ENCODE measurements at regions of chrX and their contacts with region 1.

Region 1: DNA sequence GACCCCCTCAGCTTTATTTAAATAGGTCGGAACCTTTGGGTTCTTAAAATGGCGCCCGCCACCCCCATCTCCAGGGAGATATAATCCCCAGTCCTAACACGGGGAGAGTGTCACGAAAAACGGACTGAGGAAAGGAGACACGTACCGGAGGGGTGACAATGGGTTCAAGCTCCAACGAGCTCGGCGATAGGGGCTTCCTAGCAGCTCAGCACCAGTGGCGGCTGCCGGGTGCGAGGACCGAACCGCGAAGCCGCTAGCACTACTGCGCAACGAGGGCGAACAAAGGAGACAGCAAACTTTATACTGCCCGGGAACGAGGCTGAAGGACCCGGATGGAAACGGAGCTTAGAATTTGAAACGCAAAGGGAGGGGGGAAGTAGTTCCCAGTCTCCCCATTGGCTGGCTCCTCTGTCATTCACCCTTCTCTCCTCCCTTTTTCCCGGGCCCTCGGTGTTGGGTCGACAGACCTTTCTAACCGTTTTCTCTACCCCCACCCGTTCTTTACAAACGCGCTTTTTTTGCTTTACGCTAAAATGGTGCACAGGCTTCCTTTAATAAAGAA is at the start of gene RBMX:
- DNase-seq: peak; percentile 88 to 91 (median 90)
- H3K4me3 ChIP-seq: peak within 1 kb of the TSS; percentile 86 to 90
- H3K4me3 Mint-ChIP-seq: peak within 1 kb of the TSS; percentile 93 to 99 (median 98)
- H3K27ac ChIP-seq: peak within 1 kb of the TSS; percentile 99
- H3K27ac Mint-ChIP-seq: peak within 1 kb of the TSS; percentile 97 to 100 (median 99)
- H3K4me1 ChIP-seq: peaks cover 17% of the 10 kb centered on the region
- H3K4me1 Mint-ChIP-seq: peaks cover 1 to 30% (median 16%) of the 10 kb centered on the region in 4 donors
- H3K27me3 ChIP-seq: no peaks in the 10 kb centered on the region
- H3K27me3 Mint-ChIP-seq: no peaks in the 10 kb centered on the region
- total RNA-seq, gene RBMX: 239 to 246 TPM

Region 2: GRCh38 chrX:136711147-136711546 is 169.4 kb before region 1 on chrX:
- CTCF ChIA-PET with region 1: interaction called, 3 read pairs
- POLR2A ChIA-PET with region 1: interaction called, 10 read pairs
- intact Hi-C with region 1: no loop called
- DNase-seq: no peak
- H3K4me3 ChIP-seq: no peak overlapping the region
- H3K4me3 Mint-ChIP-seq: peak overlapping the region in 3 of 8 donors; percentile 1 to 69 (median 3)
- H3K27ac ChIP-seq: peak overlapping the region; percentile 56
- H3K27ac Mint-ChIP-seq: peak overlapping the region; percentile 81 to 98 (median 92)
- H3K4me1 ChIP-seq: peaks cover 56% of the 10 kb centered on the region
- H3K4me1 Mint-ChIP-seq: peaks cover 26 to 51% (median 36%) of the 10 kb centered on the region in 4 donors
- H3K27me3 ChIP-seq: no peaks in the 10 kb centered on the region
- H3K27me3 Mint-ChIP-seq: no peaks in the 10 kb centered on the region

Region 3: GRCh38 chrX:136767104-136767941 is 113.2 kb before region 1 on chrX:
- CTCF ChIA-PET with region 1: no interaction called
- POLR2A ChIA-PET with region 1: interaction called, 49 read pairs
- intact Hi-C with region 1: no loop called
- DNase-seq: peak; percentile 38 to 63 (median 58)
- H3K4me3 ChIP-seq: peak overlapping the region in 1 of 2 donors; percentile 41
- H3K4me3 Mint-ChIP-seq: peak overlapping the region; percentile 77 to 96 (median 82)
- H3K27ac ChIP-seq: peak overlapping the region; percentile 51
- H3K27ac Mint-ChIP-seq: peak overlapping the region in 6 of 7 donors; percentile 82 to 97 (median 93)
- H3K4me1 ChIP-seq: peaks cover 68% of the 10 kb centered on the region
- H3K4me1 Mint-ChIP-seq: peaks cover 37 to 74% (median 53%) of the 10 kb centered on the region in 4 donors
- H3K27me3 ChIP-seq: no peaks in the 10 kb centered on the region
- H3K27me3 Mint-ChIP-seq: no peaks in the 10 kb centered on the region

Region 4: GRCh38 chrX:136847876-136848337 is 32.6 kb before region 1 on chrX:
- CTCF ChIA-PET with region 1: no interaction called
- POLR2A ChIA-PET with region 1: no interaction called
- intact Hi-C with region 1: no loop called
- DNase-seq: no peak
- H3K4me3 ChIP-seq: no peak overlapping the region
- H3K4me3 Mint-ChIP-seq: no peak overlapping the region
- H3K27ac ChIP-seq: no peak overlapping the region
- H3K27ac Mint-ChIP-seq: no peak overlapping the region
- H3K4me1 ChIP-seq: no peaks in the 10 kb centered on the region
- H3K4me1 Mint-ChIP-seq: peaks cover 0 to 4% (median 0%) of the 10 kb centered on the region in 4 donors
- H3K27me3 ChIP-seq: no peaks in the 10 kb centered on the region
- H3K27me3 Mint-ChIP-seq: no peaks in the 10 kb centered on the region

Region 5: GRCh38 chrX:136866337-136867095 is 14.0 kb before region 1 on chrX:
- CTCF ChIA-PET with region 1: interaction called, 8 read pairs
- POLR2A ChIA-PET with region 1: interaction called, 38 read pairs
- intact Hi-C with region 1: no loop called
- DNase-seq: no peak
- H3K4me3 ChIP-seq: no peak overlapping the region
- H3K4me3 Mint-ChIP-seq: peak overlapping the region in 1 of 8 donors; percentile 35
- H3K27ac ChIP-seq: no peak overlapping the region
- H3K27ac Mint-ChIP-seq: peak overlapping the region in 6 of 7 donors; percentile 47 to 77 (median 70)
- H3K4me1 ChIP-seq: peaks cover 23% of the 10 kb centered on the region
- H3K4me1 Mint-ChIP-seq: peaks cover 15 to 48% (median 30%) of the 10 kb centered on the region in 4 donors
- H3K27me3 ChIP-seq: no peaks in the 10 kb centered on the region
- H3K27me3 Mint-ChIP-seq: no peaks in the 10 kb centered on the region

Region 6: DNA sequence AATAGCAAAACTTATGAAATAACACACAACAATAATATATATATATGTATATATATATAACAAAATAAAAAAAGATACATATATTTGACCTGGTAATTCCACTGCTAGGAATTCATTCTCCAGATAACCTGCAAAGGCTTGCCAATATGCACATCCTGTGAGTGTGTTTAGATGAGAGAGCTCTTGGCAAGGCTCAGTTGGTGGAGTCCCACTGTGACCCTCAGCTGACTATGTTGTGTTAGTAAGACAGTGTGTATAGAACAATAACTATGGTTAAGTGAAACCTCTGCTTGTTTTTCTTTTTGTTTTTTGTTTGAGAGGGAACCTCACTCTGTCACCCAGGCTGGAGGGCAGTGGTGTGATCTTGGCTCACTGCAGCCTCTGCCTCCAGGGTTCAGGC is 39.5 kb after region 1 on chrX:
- CTCF ChIA-PET with region 1: interaction called, 5 read pairs
- POLR2A ChIA-PET with region 1: interaction called, 11 read pairs
- intact Hi-C with region 1: loop called (anchors 1 kb)
- DNase-seq: no peak
- H3K4me3 ChIP-seq: no peak overlapping the region
- H3K4me3 Mint-ChIP-seq: no peak overlapping the region
- H3K27ac ChIP-seq: no peak overlapping the region
- H3K27ac Mint-ChIP-seq: no peak overlapping the region
- H3K4me1 ChIP-seq: peaks cover 3% of the 10 kb centered on the region
- H3K4me1 Mint-ChIP-seq: peaks cover 1 to 3% (median 2%) of the 10 kb centered on the region in 4 donors
- H3K27me3 ChIP-seq: no peaks in the 10 kb centered on the region
- H3K27me3 Mint-ChIP-seq: no peaks in the 10 kb centered on the region